Heart left ventricle (tissue), 16 donors: ENCODE measurements at regions of chr11 and their contacts with region 1.

Region 1: GRCh38 chr11:3160252-3161031 is 4.7 kb downstream of the OSBPL5 start:
- DNase-seq: peak; percentile 88 to 94 (median 92)
- ATAC-seq: peak; percentile 74 to 88 (median 84)
- H3K4me3 ChIP-seq: peak overlapping the region; percentile 6 to 65 (median 58)
- H3K27ac ChIP-seq: peak overlapping the region; percentile 7 to 88 (median 72)
- H3K4me1 ChIP-seq: peaks cover 7 to 85% (median 66%) of the 10 kb centered on the region in 12 donors
- H3K27me3 ChIP-seq: no peaks in the 10 kb centered on the region
- CTCF ChIP-seq: no peak
- POLR2A ChIP-seq: no peak

Region 2: DNA sequence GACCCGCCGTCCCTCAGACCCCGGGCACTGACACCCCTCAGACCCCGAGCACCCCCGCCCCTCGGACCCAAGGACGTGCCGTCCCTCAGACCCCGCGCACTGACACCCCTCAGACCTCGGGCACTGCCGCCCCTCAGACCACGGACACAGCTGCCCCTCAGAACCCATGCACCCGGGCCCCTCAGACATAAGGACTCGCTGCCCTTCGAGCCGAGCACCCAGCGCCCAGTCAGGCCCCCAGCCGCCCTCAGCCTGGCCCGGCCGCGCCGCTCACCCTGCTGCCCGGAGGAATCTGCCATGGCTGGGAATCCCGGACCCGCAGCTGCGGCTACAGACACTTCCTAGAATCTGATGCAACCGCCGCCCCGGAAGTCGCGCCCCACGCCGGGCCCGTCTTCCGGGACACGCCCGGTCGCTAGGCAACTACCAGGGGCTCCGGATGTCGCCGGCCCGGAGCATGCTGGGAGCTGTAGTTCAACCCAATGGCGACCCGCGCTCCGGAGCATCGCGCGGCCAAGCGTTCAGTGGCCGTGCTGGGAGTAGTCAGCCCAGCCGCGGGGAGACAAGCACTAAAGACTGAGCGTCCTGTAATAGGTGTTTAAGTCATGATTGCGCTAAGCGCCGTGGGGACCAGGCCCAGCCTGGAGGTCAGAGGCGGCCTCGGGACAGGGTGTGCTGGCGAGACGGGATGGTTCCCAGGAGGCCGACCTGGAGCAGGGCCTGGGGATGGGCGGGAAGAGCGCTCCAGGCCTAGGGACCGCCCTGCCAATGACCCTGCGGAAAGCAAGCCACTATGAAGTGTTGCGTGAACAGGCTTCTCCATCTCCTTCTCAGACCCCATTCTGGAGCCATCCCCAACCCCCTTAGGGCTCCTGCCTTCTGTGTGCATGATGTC is 103.1 kb before region 1 on chr11 and contains the start of gene CARS1:
- intact Hi-C with region 1: loop called in 2 of 10 experiments (anchors 10 kb)
- DNase-seq: peak; percentile 96 to 98 (median 97)
- ATAC-seq: peak; percentile 96 to 99 (median 98)
- H3K4me3 ChIP-seq: peak within 1 kb of the TSS; percentile 68 to 99 (median 88)
- H3K27ac ChIP-seq: peak within 1 kb of the TSS; percentile 48 to 91 (median 82)
- H3K4me1 ChIP-seq: peaks cover 0 to 40% (median 25%) of the 10 kb centered on the region in 12 donors
- H3K27me3 ChIP-seq: no peaks in the 10 kb centered on the region
- CTCF ChIP-seq: peak in 1 of 12 donors; percentile 11
- POLR2A ChIP-seq: peak in 1 of 2 donors; percentile 81
- total RNA-seq, gene CARS1: 10.2 to 29.3 (median 18.5) TPM

Region 3: GRCh38 chr11:3109921-3110706 is 50.3 kb before region 1 on chr11:
- intact Hi-C with region 1: loop called in 1 of 10 experiments (anchors 5 kb)
- DNase-seq: peak; percentile 29 to 72 (median 39)
- ATAC-seq: peak; percentile 58 to 84 (median 78)
- H3K4me3 ChIP-seq: no peak overlapping the region
- H3K27ac ChIP-seq: no peak overlapping the region
- H3K4me1 ChIP-seq: peaks cover 0 to 14% (median 0%) of the 10 kb centered on the region in 12 donors
- H3K27me3 ChIP-seq: no peaks in the 10 kb centered on the region
- CTCF ChIP-seq: peak; percentile 56 to 75 (median 64)
- POLR2A ChIP-seq: no peak

Region 4: DNA sequence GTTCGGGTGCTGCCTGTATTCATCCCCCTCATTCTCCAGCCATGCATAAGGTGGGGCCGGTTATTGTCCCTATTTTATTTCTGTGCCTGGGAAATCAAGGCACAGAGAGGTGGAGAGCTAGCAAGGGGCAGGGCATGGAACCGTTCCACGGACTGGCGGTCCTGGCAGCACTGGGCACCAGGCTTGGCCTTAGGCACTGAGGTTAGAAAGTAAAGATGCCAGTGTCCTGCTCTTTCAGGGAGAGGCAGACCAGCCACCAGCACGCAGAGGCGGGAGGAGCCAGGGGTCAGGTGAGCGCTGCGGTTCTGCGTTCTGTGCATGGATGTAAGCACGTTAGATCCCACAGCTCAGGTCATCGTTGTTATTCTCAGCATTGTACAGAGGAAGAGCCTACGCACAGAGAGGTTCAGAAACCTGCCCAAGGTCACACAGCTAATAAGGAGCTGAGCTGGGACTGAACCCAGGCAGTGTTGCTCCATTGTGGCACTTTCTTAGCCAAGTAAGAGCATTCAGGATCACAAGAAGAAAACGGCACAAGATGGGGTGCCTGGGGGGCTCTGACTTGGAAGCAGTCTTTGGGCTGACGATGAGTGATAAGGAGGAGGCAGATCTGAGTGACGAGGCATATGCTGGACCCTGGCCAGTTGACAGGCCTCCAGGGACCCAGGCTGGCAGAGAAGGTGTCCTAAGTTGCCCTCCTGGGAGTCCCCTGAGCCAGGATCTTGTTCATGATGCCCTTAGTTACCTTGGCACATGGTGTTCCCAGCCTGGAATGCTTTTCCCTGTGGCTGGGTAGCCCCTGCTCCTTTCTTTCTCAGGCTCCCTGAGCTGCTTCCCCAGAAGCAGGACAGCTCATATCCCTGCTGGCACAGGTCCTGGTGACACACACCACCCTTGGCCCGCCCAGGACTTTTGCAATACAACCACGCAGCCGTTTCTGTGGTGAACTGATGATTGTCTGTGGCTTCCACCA is 36.4 kb before region 1 on chr11:
- intact Hi-C with region 1: loop called in 3 of 10 experiments (anchors 5 kb)
- DNase-seq: peak; percentile 64 to 91 (median 82)
- ATAC-seq: peak; percentile 35 to 82 (median 65)
- H3K4me3 ChIP-seq: no peak overlapping the region
- H3K27ac ChIP-seq: peak overlapping the region in 11 of 12 donors; percentile 19 to 82 (median 56)
- H3K4me1 ChIP-seq: peaks cover 3 to 48% (median 30%) of the 10 kb centered on the region in 12 donors
- H3K27me3 ChIP-seq: no peaks in the 10 kb centered on the region
- CTCF ChIP-seq: no peak
- POLR2A ChIP-seq: no peak